ENCODE measurements at regions of chr18 and their contacts with region 1.

Region 1: GRCh38 chr18:31685097-31686082 is 1.0 kb upstream of the B4GALT6 start:
- DNase-seq: peak; percentile 14 to 64 (median 35)
- ATAC-seq: peak; percentile 82
- H3K4me3 ChIP-seq: peak overlapping the region; percentile 24
- H3K4me3 Mint-ChIP-seq: peak overlapping the region; percentile 80 to 90 (median 86)
- H3K27ac ChIP-seq: no peak overlapping the region
- H3K27ac Mint-ChIP-seq: peak overlapping the region in 5 of 9 donors; percentile 57 to 79 (median 67)
- H3K4me1 ChIP-seq: no peaks in the 10 kb centered on the region
- H3K4me1 Mint-ChIP-seq: peaks cover 8 to 18% (median 15%) of the 10 kb centered on the region in 7 donors
- H3K27me3 ChIP-seq: no peaks in the 10 kb centered on the region
- H3K27me3 Mint-ChIP-seq: peaks cover 13 to 63% (median 39%) of the 10 kb centered on the region in 5 donors

Region 2: GRCh38 chr18:31658670-31659575 is 26.5 kb before region 1 on chr18:
- CTCF ChIA-PET with region 1: no interaction called
- POLR2A ChIA-PET with region 1: no interaction called
- intact Hi-C with region 1: loop called in 1 of 2 experiments (anchors 1 kb)
- DNase-seq: peak in 2 of 9 donors; percentile 1 to 4
- ATAC-seq: peak; percentile 67
- H3K4me3 ChIP-seq: no peak overlapping the region
- H3K4me3 Mint-ChIP-seq: peak overlapping the region in 3 of 10 donors; percentile 12 to 65 (median 19)
- H3K27ac ChIP-seq: no peak overlapping the region
- H3K27ac Mint-ChIP-seq: peak overlapping the region in 2 of 9 donors; percentile 32 to 76
- H3K4me1 ChIP-seq: no peaks in the 10 kb centered on the region
- H3K4me1 Mint-ChIP-seq: peaks cover 0 to 14% (median 4%) of the 10 kb centered on the region in 7 donors
- H3K27me3 ChIP-seq: peaks cover 0 to 3% of the 10 kb centered on the region in 2 donors
- H3K27me3 Mint-ChIP-seq: peaks cover under 1 to 10% (median 7%) of the 10 kb centered on the region in 5 donors

Region 3: DNA sequence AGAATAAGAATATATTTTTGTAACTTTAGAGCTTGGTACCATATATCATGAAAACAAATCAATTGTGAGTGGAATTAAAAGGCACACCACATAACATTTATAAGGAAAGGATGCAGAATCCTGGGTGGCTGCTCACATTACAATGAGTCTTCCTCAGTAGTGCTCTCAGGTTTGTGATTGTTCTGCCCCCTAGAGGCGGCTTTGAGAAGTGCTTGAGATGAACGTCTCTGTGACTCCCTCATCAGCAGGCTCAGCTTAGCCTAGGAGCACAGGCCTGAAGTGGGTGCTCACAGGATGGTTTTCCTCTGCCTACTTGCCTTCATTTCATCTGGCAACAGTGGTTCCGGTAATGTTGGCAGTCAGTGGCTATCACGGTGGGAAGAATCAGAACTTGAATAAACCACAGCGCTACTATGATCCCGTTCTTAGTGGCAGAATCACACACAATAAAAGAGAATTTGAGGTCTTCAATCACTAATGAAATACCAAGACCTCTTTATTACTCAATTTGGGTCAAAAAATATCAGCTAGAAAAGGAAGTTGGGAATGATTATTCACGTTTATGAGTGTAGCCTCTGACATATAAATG is 37.1 kb after region 1 on chr18:
- CTCF ChIA-PET with region 1: no interaction called
- POLR2A ChIA-PET with region 1: no interaction called
- intact Hi-C with region 1: loop called in 1 of 2 experiments (anchors 1 kb)
- DNase-seq: peak; percentile 33 to 69 (median 62)
- ATAC-seq: peak; percentile 90
- H3K4me3 ChIP-seq: no peak overlapping the region
- H3K4me3 Mint-ChIP-seq: peak overlapping the region in 3 of 10 donors; percentile 19 to 31 (median 27)
- H3K27ac ChIP-seq: no peak overlapping the region
- H3K27ac Mint-ChIP-seq: peak overlapping the region in 1 of 9 donors; percentile 21
- H3K4me1 ChIP-seq: no peaks in the 10 kb centered on the region
- H3K4me1 Mint-ChIP-seq: peaks cover 0 to 8% (median 6%) of the 10 kb centered on the region in 7 donors
- H3K27me3 ChIP-seq: no peaks in the 10 kb centered on the region
- H3K27me3 Mint-ChIP-seq: peaks cover 14 to 35% (median 23%) of the 10 kb centered on the region in 5 donors

Region 4: GRCh38 chr18:32158108-32158624 is 472.8 kb after region 1 on chr18:
- CTCF ChIA-PET with region 1: no interaction called
- POLR2A ChIA-PET with region 1: no interaction called
- intact Hi-C with region 1: loop called in 1 of 2 experiments (anchors 10 kb)
- DNase-seq: peak; percentile 34 to 81 (median 75)
- ATAC-seq: peak; percentile 96
- H3K4me3 ChIP-seq: peak overlapping the region; percentile 36
- H3K4me3 Mint-ChIP-seq: peak overlapping the region; percentile 39 to 89 (median 78)
- H3K27ac ChIP-seq: no peak overlapping the region
- H3K27ac Mint-ChIP-seq: peak overlapping the region in 2 of 9 donors; percentile 1 to 14
- H3K4me1 ChIP-seq: no peaks in the 10 kb centered on the region
- H3K4me1 Mint-ChIP-seq: peaks cover 0 to 9% (median 6%) of the 10 kb centered on the region in 7 donors
- H3K27me3 ChIP-seq: no peaks in the 10 kb centered on the region
- H3K27me3 Mint-ChIP-seq: peaks cover 0 to 15% (median 0%) of the 10 kb centered on the region in 5 donors

Region 5: GRCh38 chr18:32420084-32420750 is 734.8 kb after region 1 on chr18:
- CTCF ChIA-PET with region 1: no interaction called
- POLR2A ChIA-PET with region 1: no interaction called
- intact Hi-C with region 1: no loop called
- DNase-seq: no peak
- ATAC-seq: no peak
- H3K4me3 ChIP-seq: no peak overlapping the region
- H3K4me3 Mint-ChIP-seq: no peak overlapping the region
- H3K27ac ChIP-seq: no peak overlapping the region
- H3K27ac Mint-ChIP-seq: no peak overlapping the region
- H3K4me1 ChIP-seq: no peaks in the 10 kb centered on the region
- H3K4me1 Mint-ChIP-seq: peaks cover 0 to 2% (median 0%) of the 10 kb centered on the region in 7 donors
- H3K27me3 ChIP-seq: no peaks in the 10 kb centered on the region
- H3K27me3 Mint-ChIP-seq: peaks cover 0 to 15% (median 6%) of the 10 kb centered on the region in 5 donors